Activated CD8-positive, alpha-beta T cell treated with anti-CD3 and anti-CD28 coated beads for 36 hours (primary cell): ENCODE measurements at regions of chr1 and their contacts with region 1.

Region 1: GRCh38 chr1:206706298-206706791 is 21.6 kb downstream of the MAPKAPK2 start:
- DNase-seq: peak; percentile 84
- ATAC-seq: peak; percentile 49
- H3K4me3 Mint-ChIP-seq: no peak overlapping the region
- H3K27ac Mint-ChIP-seq: peak overlapping the region; percentile 28
- H3K4me1 Mint-ChIP-seq: peaks cover 83% of the 10 kb centered on the region
- H3K27me3 Mint-ChIP-seq: no peaks in the 10 kb centered on the region
- CTCF ChIP-seq: no peak

Region 2: GRCh38 chr1:206716870-206717673 is 10.7 kb after region 1 on chr1:
- CTCF ChIA-PET with region 1: interaction called, 19 read pairs
- POLR2A ChIA-PET with region 1: interaction called, 4 read pairs
- intact Hi-C with region 1: no loop called
- DNase-seq: peak; percentile 43
- ATAC-seq: peak; percentile 61
- H3K4me3 Mint-ChIP-seq: peak overlapping the region; percentile 15
- H3K27ac Mint-ChIP-seq: peak overlapping the region; percentile 79
- H3K4me1 Mint-ChIP-seq: peaks cover 81% of the 10 kb centered on the region
- H3K27me3 Mint-ChIP-seq: no peaks in the 10 kb centered on the region
- CTCF ChIP-seq: no peak

Region 3: DNA sequence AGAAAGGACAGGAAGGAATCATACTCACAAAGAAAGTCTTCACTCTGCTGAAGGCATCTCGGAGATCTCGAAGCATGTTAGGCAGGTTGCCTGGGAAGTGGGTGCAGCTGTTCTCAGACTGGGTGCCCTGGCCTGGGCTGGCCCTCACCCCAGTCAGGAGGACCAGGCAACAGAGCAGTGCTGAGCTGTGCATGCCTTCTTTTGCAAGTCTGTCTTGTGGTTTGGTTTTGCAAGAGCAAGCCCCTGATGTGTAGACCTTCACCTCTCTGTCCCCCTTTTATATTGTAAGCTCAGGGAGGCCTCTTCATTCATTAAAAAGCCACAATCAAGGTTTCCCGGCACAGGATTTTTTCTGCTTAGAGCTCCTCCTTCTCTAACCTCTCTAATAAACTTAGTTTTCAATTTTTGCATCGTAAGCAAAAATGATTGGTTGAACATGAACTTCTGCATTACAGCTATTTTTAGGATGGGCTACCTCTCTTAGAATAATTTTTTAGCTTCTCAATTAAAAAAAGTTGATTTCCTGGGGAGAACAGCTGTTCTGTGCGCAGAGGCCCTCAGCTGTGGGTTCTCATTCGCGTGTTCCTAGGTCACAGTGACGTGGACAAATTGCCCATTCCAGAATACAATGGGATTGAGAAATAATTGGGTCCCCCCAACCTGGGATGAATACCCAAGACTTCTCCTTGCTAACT is 66.0 kb after region 1 on chr1 and contains the start of gene IL10:
- CTCF ChIA-PET with region 1: no interaction called
- POLR2A ChIA-PET with region 1: no interaction called
- intact Hi-C with region 1: no loop called
- DNase-seq: no peak
- ATAC-seq: no peak
- H3K4me3 Mint-ChIP-seq: no peak within 1 kb of the TSS
- H3K27ac Mint-ChIP-seq: no peak within 1 kb of the TSS
- H3K4me1 Mint-ChIP-seq: peaks cover 67% of the 10 kb centered on the region
- H3K27me3 Mint-ChIP-seq: peaks cover 12% of the 10 kb centered on the region
- CTCF ChIP-seq: no peak
- total RNA-seq, gene IL10: 0.32 TPM in 1 of 2 experiments, not detected in the other